Activated CD4-positive, alpha-beta T cell treated with anti-CD3 and anti-CD28 coated beads for 36 hours (primary cell): ENCODE measurements at regions of chr9 and their contacts with region 1.

Region 1: GRCh38 chr9:122810306-122810946 is 10.5 kb downstream of the OR1K1 start:
- DNase-seq: peak; percentile 86
- ATAC-seq: peak; percentile 45
- H3K4me3 Mint-ChIP-seq: no peak overlapping the region
- H3K27ac Mint-ChIP-seq: no peak overlapping the region
- H3K4me1 Mint-ChIP-seq: peaks cover 29% of the 10 kb centered on the region
- H3K27me3 Mint-ChIP-seq: no peaks in the 10 kb centered on the region

Region 2: DNA sequence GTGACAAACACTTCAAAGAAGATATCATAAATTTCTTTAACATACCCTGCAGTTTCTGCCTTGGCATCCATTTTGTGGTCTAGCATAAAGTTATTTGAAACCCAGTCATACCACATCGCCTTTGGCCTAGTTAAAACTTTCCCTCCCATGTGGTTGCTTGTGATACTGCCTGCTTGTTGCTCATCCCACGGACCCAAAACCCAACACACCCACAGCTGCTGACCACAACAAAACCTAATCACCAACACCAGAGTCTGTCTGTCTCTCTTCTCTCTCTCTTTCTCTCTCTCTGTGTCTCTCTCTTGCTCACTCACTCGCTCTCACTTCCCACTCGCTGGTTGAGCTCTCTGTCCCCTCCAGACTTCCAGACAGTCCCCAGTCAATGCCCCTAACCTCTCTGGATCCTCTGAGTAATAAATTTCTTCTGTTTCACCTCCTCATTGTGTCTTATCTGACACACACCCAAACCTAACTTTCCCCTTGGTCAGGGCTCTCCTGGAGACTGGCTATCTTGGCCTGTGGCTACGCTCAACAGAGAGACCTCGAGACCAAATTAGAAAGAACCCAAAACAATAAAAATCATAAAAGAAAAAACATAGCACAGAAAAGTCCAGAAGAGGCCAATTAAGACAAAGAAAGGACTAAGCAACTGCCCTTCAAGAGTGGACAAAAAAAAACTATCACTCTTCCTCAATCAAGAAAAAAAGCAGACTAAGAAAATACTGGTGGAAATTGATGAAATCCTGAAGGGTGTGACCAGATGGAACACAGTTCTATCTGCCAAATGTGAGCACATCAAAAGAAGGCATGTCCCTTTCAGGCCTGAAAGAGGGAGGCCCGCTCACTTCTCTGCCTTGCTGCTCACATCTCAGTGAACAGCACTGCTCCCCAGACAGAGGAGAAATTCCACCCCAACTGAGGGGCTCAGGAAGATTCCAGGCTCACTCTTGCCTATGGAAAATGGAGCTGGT is 758.8 kb before region 1 on chr9:
- CTCF ChIA-PET with region 1: no interaction called
- POLR2A ChIA-PET with region 1: no interaction called
- intact Hi-C with region 1: loop called in 1 of 2 experiments (anchors 2 kb)
- DNase-seq: peak; percentile 77
- ATAC-seq: peak; percentile 86
- H3K4me3 Mint-ChIP-seq: no peak overlapping the region
- H3K27ac Mint-ChIP-seq: no peak overlapping the region
- H3K4me1 Mint-ChIP-seq: peaks cover 22% of the 10 kb centered on the region
- H3K27me3 Mint-ChIP-seq: no peaks in the 10 kb centered on the region

Region 3: GRCh38 chr9:122125158-122125508 is 685.3 kb before region 1 on chr9:
- CTCF ChIA-PET with region 1: interaction called, 7 read pairs
- POLR2A ChIA-PET with region 1: no interaction called
- intact Hi-C with region 1: loop called (anchors 1 kb)
- DNase-seq: peak; percentile 88
- ATAC-seq: peak; percentile 80
- H3K4me3 Mint-ChIP-seq: no peak overlapping the region
- H3K27ac Mint-ChIP-seq: no peak overlapping the region
- H3K4me1 Mint-ChIP-seq: peaks cover 13% of the 10 kb centered on the region
- H3K27me3 Mint-ChIP-seq: peaks cover 23% of the 10 kb centered on the region

Region 4: DNA sequence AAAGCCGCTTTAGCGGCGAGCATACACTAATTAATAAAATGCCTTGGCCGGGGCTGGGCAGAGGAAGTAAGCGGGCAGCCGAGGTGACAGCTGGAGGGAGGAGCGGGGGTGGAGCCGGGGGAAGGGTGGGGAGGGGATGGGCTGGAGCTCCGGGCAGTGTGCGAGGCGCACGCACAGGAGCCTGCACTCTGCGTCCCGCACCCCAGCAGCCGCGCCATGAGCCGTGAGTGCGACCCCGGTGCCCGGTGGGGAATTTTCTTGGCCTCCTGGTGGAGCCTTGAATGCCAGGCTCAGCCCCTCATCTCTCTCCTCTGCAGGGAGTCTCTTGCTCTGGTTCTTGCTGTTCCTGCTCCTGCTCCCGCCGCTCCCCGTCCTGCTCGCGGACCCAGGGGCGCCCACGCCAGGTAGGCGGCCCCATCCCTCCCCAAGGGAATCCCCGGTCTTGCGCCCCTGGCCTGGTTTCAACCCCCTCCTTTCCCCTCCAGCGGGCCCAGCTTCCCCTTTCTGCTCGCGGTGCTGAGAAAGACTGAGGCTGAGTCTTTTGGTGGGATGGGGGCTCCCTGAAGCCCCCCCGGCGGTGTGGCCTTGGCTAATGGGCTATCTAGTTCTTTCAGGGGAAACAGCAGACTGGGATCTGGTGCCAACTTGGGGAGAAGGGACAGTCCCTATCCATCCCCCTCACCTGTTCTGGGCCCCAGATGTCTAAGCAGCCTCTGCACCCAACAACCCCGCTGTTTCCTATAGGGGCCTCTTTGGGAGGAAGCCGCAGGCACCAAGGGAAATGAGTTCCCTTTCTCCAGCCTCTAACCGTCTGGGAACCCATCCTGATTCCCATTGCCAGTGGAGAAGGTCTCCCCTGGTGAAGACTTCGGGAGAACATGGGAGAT is 439.3 kb before region 1 on chr9 and contains the start of gene PTGS1:
- CTCF ChIA-PET with region 1: no interaction called
- POLR2A ChIA-PET with region 1: no interaction called
- intact Hi-C with region 1: loop called in 1 of 2 experiments (anchors 10 kb)
- DNase-seq: peak; percentile 19
- ATAC-seq: peak; percentile 33
- H3K4me3 Mint-ChIP-seq: no peak within 1 kb of the TSS
- H3K27ac Mint-ChIP-seq: no peak within 1 kb of the TSS
- H3K4me1 Mint-ChIP-seq: peaks cover 9% of the 10 kb centered on the region
- H3K27me3 Mint-ChIP-seq: peaks cover 30% of the 10 kb centered on the region
- total RNA-seq, gene PTGS1: 0.09 TPM in 1 of 2 experiments, not detected in the other

Region 5: GRCh38 chr9:122464633-122465567 is 345.5 kb before region 1 on chr9:
- CTCF ChIA-PET with region 1: interaction called, 16 read pairs
- POLR2A ChIA-PET with region 1: no interaction called
- intact Hi-C with region 1: loop called (anchors 1 kb)
- DNase-seq: peak; percentile 81
- ATAC-seq: peak; percentile 84
- H3K4me3 Mint-ChIP-seq: peak overlapping the region; percentile 68
- H3K27ac Mint-ChIP-seq: peak overlapping the region; percentile 79
- H3K4me1 Mint-ChIP-seq: peaks cover 14% of the 10 kb centered on the region
- H3K27me3 Mint-ChIP-seq: peaks cover 27% of the 10 kb centered on the region

Region 6: GRCh38 chr9:122846371-122846940 is 36.0 kb after region 1 on chr9:
- CTCF ChIA-PET with region 1: interaction called, 3 read pairs
- POLR2A ChIA-PET with region 1: no interaction called
- intact Hi-C with region 1: loop called (anchors 1 kb)
- DNase-seq: no peak
- ATAC-seq: peak; percentile 48
- H3K4me3 Mint-ChIP-seq: no peak overlapping the region
- H3K27ac Mint-ChIP-seq: peak overlapping the region; percentile 92
- H3K4me1 Mint-ChIP-seq: peaks cover 34% of the 10 kb centered on the region
- H3K27me3 Mint-ChIP-seq: no peaks in the 10 kb centered on the region